ENCODE measurements at regions of chr2 and their contacts with region 1.

Region 1: GRCh38 chr2:37672104-37672869 is 845 bp upstream of the CDC42EP3 start:
- DNase-seq: peak; percentile 81
- ATAC-seq: peak; percentile 40
- H3K4me3 ChIP-seq: peak overlapping the region; percentile 90
- H3K27ac ChIP-seq: 0 out of 2 replicates have a peak overlapping the region, but pooled peaks have one; percentile 2
- H3K4me1 ChIP-seq: peaks cover 35% of the 10 kb centered on the region
- H3K27me3 ChIP-seq: no peaks in the 10 kb centered on the region
- CTCF ChIP-seq: no peak

Region 2: GRCh38 chr2:37585982-37586621 is 86.2 kb before region 1 on chr2:
- CTCF ChIA-PET with region 1: no interaction called
- POLR2A ChIA-PET with region 1: interaction called, 23 read pairs
- intact Hi-C with region 1: loop called (anchors 2 kb)
- DNase-seq: peak; percentile 95
- ATAC-seq: peak; percentile 64
- H3K4me3 ChIP-seq: peak overlapping the region; percentile 41; the same call in 1 of the 2 replicates
- H3K27ac ChIP-seq: peak overlapping the region; percentile 90
- H3K4me1 ChIP-seq: peaks cover 84% of the 10 kb centered on the region
- H3K27me3 ChIP-seq: no peaks in the 10 kb centered on the region
- CTCF ChIP-seq: no peak

Region 3: GRCh38 chr2:37767956-37768925 is 96.0 kb after region 1 on chr2:
- CTCF ChIA-PET with region 1: no interaction called
- POLR2A ChIA-PET with region 1: no interaction called
- intact Hi-C with region 1: loop called (anchors 1 kb)
- DNase-seq: peak; percentile 93
- ATAC-seq: peak; percentile 96
- H3K4me3 ChIP-seq: peak overlapping the region; percentile 13; the same call in 1 of the 2 replicates
- H3K27ac ChIP-seq: peak overlapping the region; percentile 12; the same call in 1 of the 2 replicates
- H3K4me1 ChIP-seq: peaks cover 51% of the 10 kb centered on the region
- H3K27me3 ChIP-seq: no peaks in the 10 kb centered on the region
- CTCF ChIP-seq: no peak

Region 4: DNA sequence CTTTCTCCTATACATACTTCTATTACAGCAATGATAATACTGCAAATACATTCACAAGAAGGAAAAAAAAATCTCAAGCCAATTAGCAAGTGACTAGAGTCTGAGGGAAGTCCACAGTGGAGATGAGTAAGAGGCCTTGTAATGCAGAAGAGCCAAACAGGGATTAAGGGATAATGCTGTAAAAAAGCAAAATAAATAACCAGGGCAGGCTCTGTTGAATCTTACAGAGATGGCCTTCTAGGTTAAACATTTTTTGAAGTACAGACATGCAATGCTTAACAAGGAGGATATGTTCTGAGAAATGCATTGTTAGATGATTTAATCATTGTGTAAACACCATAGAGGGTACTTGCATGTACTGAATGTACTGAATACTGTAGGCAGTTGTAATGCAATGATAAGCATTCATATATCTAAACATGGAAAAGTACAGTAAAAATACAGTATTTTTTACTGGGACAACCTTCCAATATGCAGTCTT is 130.7 kb after region 1 on chr2:
- CTCF ChIA-PET with region 1: no interaction called
- POLR2A ChIA-PET with region 1: no interaction called
- intact Hi-C with region 1: loop called (anchors 2 kb)
- DNase-seq: peak; percentile 91
- ATAC-seq: peak; percentile 95
- H3K4me3 ChIP-seq: peak overlapping the region; percentile 44
- H3K27ac ChIP-seq: peak overlapping the region; percentile 89
- H3K4me1 ChIP-seq: peaks cover 41% of the 10 kb centered on the region
- H3K27me3 ChIP-seq: no peaks in the 10 kb centered on the region
- CTCF ChIP-seq: no peak